ENCODE measurements at regions of chr16 and their contacts with region 1.

Region 1: DNA sequence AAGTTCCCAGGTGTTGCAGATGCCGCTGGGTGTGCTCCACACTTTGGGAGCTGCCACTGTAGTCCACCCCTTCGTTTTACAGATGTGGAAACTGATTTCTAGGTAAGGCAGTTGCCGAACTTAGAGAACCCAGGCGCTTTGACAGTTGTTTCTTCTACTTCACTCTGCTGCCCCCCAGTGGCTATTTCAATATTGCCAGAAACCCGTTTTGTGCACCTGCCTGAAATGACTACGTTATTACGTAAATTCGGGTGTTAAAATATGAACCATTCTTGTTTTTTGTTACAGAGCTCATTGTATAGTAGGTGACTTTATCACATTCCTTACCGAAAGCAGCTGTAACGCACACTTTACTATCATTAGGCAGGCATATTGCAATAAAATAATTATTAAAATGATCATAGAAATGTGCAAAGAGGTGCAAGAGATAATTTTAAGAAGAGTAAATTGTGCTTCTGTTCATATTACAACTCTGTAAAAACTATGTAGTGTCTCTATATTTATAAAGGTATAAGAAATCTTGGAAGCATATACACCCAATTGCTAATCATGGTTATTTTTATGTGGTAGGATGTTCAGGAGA is 44.9 kb downstream of the OTOA start:
- DNase-seq: peak; percentile 78
- ATAC-seq: peak; percentile 64
- H3K4me3 ChIP-seq: no peak overlapping the region
- H3K27ac ChIP-seq: no peak overlapping the region
- H3K4me1 ChIP-seq: no peaks in the 10 kb centered on the region
- H3K27me3 ChIP-seq: peaks cover 3 to 50% of the 10 kb centered on the region in 2 experiments; a peak in 4 of 5 replicates
- CTCF ChIP-seq: peak; percentile 91
- EP300 ChIP-seq: no peak
- POLR2A ChIP-seq: no peak
- RAD21 ChIP-seq: peak; percentile 84

Region 2: DNA sequence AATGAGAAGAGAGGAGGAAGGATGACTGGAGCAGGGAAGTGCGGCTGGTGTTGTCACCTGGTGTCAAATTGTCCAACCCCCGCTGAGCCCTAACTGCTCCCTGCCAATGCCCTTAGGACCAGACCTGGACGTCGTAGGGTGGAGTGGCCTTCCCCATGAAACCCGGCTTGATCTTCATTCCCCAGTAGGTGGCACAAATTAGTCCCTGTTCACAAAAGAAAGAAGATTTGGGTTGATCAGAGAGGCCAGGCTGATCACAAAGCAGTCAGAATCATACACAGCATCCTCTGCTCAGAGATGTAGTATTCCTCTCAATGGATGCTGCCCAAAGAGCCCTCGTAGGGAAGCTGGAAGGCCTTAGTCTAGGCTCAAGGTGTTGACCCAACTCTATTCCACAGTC is 1071.4 kb before region 1 on chr16:
- CTCF ChIA-PET with region 1: no interaction called
- POLR2A ChIA-PET with region 1: no interaction called
- in situ Hi-C with region 1: no loop called
- intact Hi-C with region 1: no loop called
- DNase-seq: no peak
- ATAC-seq: peak; percentile 48
- H3K4me3 ChIP-seq: no peak overlapping the region
- H3K27ac ChIP-seq: no peak overlapping the region
- H3K4me1 ChIP-seq: peaks cover 14% of the 10 kb centered on the region
- H3K27me3 ChIP-seq: no peaks in the 10 kb centered on the region; a peak in 1 of 5 replicates
- CTCF ChIP-seq: peak; percentile 29; the same call in 1 of the 2 replicates
- EP300 ChIP-seq: no peak
- POLR2A ChIP-seq: no peak
- RAD21 ChIP-seq: no peak

Region 3: GRCh38 chr16:21656795-21657768 is 51.5 kb before region 1 on chr16:
- CTCF ChIA-PET with region 1: interaction called, 54 read pairs
- POLR2A ChIA-PET with region 1: no interaction called
- in situ Hi-C with region 1: loop called (anchors 5 kb)
- intact Hi-C with region 1: loop called (anchors 1 kb)
- DNase-seq: peak; percentile 75
- ATAC-seq: peak; percentile 49
- H3K4me3 ChIP-seq: no peak overlapping the region
- H3K27ac ChIP-seq: no peak overlapping the region
- H3K4me1 ChIP-seq: no peaks in the 10 kb centered on the region
- H3K27me3 ChIP-seq: no peaks in the 10 kb centered on the region
- CTCF ChIP-seq: peak; percentile 92
- EP300 ChIP-seq: no peak
- POLR2A ChIP-seq: no peak
- RAD21 ChIP-seq: peak; percentile 86

Measured in HepG2 (cell line).